ENCODE measurements at regions of chr12 and their contacts with region 1.

Region 1: DNA sequence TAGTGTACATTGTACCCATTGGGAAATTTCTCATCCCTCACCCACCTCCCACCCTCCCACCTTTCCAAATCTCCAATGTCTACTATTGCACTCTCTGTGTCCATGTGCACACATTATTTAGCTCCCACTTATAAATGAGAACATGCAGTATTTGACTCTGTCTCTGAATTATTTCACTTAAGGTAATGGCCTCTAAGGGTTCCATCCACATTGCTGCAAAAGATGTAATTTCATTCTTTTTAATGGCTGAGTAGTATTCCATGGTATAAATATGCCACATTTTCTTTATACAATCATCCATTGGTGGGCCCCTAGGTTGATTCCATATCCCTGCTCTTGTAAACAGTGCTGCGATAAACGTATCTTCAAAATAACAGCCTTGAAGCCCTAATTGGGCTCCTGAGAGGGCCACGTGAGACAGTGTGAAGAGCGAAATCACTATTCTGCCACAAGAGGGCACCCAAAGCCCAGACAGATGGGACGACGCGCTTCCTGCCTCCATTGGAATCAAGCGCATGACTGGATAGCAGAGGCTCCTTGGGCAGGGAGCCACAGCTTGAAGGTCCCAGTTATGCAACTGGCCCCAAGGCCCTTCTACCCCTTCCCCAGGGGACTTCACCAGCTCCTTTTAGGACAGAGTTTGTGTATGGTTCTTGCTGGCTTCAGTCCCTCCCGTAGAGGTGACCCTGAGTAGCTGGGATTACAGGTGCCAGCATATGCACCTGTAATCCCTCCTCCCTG is 21.3 kb upstream of the CD27 start:
- DNase-seq: no peak
- ATAC-seq: peak; percentile 70
- H3K4me3 ChIP-seq: no peak overlapping the region
- H3K27ac ChIP-seq: peak overlapping the region; percentile 61
- H3K4me1 ChIP-seq: peaks cover 44% of the 10 kb centered on the region
- H3K27me3 ChIP-seq: no peaks in the 10 kb centered on the region; a peak in 1 of 4 replicates
- CTCF ChIP-seq: peak; percentile 80 to 95 (median 87); a peak in 5 of 6 replicates
- EP300 ChIP-seq: peak in 1 of 2 experiments; percentile 31; a peak in 1 of 4 replicates
- POLR2A ChIP-seq: no peak
- RAD21 ChIP-seq: peak; percentile 97

Region 2: DNA sequence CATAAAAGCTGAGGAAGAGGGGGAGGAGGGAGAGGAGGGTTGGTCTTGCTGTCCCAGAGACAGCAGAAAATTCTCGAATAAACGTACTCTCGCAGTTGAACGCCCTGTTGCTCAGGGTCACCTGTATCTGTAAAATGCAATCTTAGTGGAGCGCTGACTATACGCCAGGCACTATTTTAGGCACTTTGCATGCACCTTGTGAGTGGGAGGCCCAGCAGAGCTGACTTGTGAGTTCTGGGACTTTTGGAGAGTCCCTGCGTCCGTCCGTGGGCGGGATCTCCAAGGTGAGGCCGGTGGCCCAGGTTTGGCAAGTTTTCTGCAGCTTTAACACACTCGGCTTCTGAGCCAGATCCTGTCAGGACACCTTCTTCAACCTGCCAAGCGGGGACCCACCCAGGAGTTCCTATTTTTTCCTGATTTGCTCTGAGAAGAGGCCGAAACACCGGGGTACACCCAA is 145.4 kb before region 1 on chr12:
- CTCF ChIA-PET with region 1: no interaction called
- POLR2A ChIA-PET with region 1: no interaction called
- RAD21 ChIA-PET with region 1: no interaction called
- SMC1A ChIA-PET with region 1: no interaction called
- in situ Hi-C with region 1: no loop called
- intact Hi-C with region 1: no loop called
- DNase-seq: no peak
- ATAC-seq: peak; percentile 62
- H3K4me3 ChIP-seq: peak overlapping the region; percentile 52; the same call in 1 of the 2 replicates
- H3K27ac ChIP-seq: no peak overlapping the region; the same call in 1 of the 2 replicates
- H3K4me1 ChIP-seq: peaks cover 12% of the 10 kb centered on the region
- H3K27me3 ChIP-seq: no peaks in the 10 kb centered on the region
- CTCF ChIP-seq: no peak
- EP300 ChIP-seq: no peak
- POLR2A ChIP-seq: no peak
- RAD21 ChIP-seq: no peak

Region 3: DNA sequence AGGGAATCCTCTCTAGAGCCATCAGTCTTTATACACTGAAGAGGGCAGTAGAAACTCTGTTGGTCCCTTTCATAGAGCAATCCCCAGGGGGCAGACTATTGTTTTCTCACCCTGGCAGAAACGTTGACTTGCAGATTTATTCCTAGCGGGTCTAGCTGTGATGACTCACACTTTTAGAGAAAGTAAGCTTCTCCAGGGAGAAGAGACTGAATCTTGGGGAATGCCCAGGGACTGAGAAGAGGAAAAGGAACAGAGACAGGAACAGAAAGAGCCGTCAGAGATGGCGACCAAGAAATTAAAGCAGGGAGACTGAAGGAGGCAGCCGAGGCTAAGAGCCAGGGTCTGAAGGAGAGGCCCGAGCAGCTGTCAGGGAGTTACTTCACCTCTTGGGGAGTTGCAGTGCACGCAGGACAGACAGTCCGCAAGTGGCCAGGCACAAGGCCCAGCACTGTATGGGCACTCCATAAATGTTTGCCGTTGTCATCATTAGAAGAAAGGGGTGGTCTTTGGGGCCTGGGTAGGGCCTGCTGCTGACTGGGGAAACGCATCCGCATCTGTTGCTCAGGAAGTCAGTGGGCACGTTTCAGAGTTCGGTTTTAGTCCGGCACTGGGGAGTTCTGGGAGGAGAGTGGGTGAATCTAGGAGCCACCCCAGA is 100.0 kb before region 1 on chr12:
- CTCF ChIA-PET with region 1: interaction called, 16 read pairs
- POLR2A ChIA-PET with region 1: interaction called, 3 read pairs
- RAD21 ChIA-PET with region 1: interaction called, 9 read pairs
- SMC1A ChIA-PET with region 1: interaction called, 17 read pairs
- in situ Hi-C with region 1: no loop called
- intact Hi-C with region 1: loop called (anchors 2 kb)
- DNase-seq: peak; percentile 71
- ATAC-seq: peak; percentile 87
- H3K4me3 ChIP-seq: no peak overlapping the region
- H3K27ac ChIP-seq: peak overlapping the region; percentile 79
- H3K4me1 ChIP-seq: peaks cover 31% of the 10 kb centered on the region
- H3K27me3 ChIP-seq: no peaks in the 10 kb centered on the region
- CTCF ChIP-seq: peak; percentile 38 to 45 (median 45); a peak in 5 of 6 replicates
- EP300 ChIP-seq: peak; percentile 46 to 53; a peak in 1 of 4 replicates
- POLR2A ChIP-seq: 0 out of 2 replicates have a peak, but pooled peaks have one; percentile 18
- RAD21 ChIP-seq: peak; percentile 34

Region 4: DNA sequence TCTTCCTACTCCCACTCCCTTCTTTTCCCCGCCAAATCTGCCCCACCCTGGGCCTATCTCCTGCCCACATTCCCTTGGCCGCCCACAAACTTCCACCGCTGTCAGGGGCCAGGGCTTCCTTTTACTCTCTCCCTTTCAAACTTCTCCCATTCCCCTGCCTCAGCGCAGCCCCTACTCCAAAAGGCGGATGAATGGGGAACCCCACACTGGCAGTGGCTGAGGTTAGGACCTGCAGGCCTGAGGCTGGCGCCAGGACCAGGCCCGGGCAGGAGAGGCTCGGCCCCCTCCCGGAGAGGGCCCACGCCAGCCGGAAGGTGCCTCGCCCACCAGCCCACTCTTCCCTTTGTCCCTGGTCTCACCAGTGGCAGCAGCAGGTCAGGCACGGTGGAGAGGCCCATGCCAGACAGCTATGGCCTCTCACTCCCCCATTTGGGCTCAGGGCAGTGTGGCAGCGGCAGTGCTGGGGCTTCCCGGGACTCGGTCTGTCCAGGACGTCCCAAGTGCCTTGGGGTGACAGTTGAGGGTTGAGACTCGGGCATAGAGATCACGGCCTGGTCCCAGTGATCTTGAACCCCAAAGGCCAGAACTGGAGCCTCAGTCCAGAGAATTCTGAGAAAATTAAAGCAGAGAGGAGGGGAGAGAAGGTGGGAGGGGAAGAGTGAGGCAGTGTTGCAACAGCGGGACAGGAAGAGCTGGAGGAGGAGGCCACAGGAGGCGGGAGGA is 81.9 kb before region 1 on chr12 and contains the start of gene TNFRSF1A:
- CTCF ChIA-PET with region 1: interaction called, 53 read pairs
- POLR2A ChIA-PET with region 1: interaction called, 9 read pairs
- RAD21 ChIA-PET with region 1: interaction called, 38 read pairs
- SMC1A ChIA-PET with region 1: interaction called, 32 read pairs
- in situ Hi-C with region 1: no loop called
- intact Hi-C with region 1: loop called (anchors 5 kb)
- DNase-seq: no peak
- ATAC-seq: peak; percentile 59
- H3K4me3 ChIP-seq: peak within 1 kb of the TSS; percentile 97
- H3K27ac ChIP-seq: peak within 1 kb of the TSS; percentile 88
- H3K4me1 ChIP-seq: peaks cover 29% of the 10 kb centered on the region
- H3K27me3 ChIP-seq: no peaks in the 10 kb centered on the region
- CTCF ChIP-seq: no peak
- EP300 ChIP-seq: no peak
- POLR2A ChIP-seq: peak; percentile 78
- RAD21 ChIP-seq: no peak
- polyA plus RNA-seq, gene TNFRSF1A: 0.24 to 0.77 TPM

Region 5: DNA sequence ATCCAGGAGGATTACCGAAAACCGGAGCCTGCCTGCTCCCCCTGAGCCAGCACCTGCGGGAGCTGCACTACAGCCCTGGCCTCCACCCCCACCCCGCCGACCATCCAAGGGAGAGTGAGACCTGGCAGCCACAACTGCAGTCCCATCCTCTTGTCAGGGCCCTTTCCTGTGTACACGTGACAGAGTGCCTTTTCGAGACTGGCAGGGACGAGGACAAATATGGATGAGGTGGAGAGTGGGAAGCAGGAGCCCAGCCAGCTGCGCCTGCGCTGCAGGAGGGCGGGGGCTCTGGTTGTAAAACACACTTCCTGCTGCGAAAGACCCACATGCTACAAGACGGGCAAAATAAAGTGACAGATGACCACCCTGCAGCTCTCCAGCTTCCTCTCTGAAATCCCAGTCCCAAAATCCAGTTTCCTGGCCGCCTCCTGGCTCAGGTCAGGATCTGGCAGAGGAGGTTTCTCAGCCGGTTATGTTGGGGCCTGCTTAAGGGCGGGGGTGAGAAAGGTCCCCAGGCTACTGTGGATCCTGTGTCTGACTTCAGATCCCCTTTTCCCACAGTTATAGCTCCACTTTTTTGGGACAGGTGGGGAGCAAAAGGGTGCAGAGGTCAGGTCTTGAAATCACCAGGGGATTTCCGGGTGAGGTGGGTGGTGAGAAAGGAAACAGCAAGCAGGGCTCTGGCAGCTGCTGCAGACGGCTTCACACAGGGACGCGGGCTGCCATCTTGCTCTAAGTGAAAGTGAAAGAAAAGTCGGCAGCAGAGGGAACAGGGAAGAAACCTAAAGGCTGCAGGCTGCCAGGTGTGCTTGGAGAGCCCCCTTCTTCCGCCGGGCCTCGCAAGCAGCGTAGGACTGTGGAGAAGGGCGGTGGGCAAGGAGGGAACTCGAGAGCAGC is 28.2 kb after region 1 on chr12 and contains the start of gene TAPBPL:
- CTCF ChIA-PET with region 1: interaction called, 37 read pairs
- POLR2A ChIA-PET with region 1: interaction called, 126 read pairs
- RAD21 ChIA-PET with region 1: interaction called, 126 read pairs
- SMC1A ChIA-PET with region 1: interaction called, 147 read pairs
- in situ Hi-C with region 1: no loop called
- intact Hi-C with region 1: loop called (anchors 1 kb)
- DNase-seq: peak; percentile 75
- ATAC-seq: peak; percentile 84
- H3K4me3 ChIP-seq: peak within 1 kb of the TSS; percentile 83
- H3K27ac ChIP-seq: peak within 1 kb of the TSS; percentile 98
- H3K4me1 ChIP-seq: peaks cover 38% of the 10 kb centered on the region
- H3K27me3 ChIP-seq: no peaks in the 10 kb centered on the region
- CTCF ChIP-seq: no peak
- EP300 ChIP-seq: peak; percentile 18 to 46; a peak in 1 of 4 replicates
- POLR2A ChIP-seq: peak; percentile 82
- RAD21 ChIP-seq: no peak
- polyA plus RNA-seq, gene TAPBPL: 12.4 to 20.9 TPM

Region 6: DNA sequence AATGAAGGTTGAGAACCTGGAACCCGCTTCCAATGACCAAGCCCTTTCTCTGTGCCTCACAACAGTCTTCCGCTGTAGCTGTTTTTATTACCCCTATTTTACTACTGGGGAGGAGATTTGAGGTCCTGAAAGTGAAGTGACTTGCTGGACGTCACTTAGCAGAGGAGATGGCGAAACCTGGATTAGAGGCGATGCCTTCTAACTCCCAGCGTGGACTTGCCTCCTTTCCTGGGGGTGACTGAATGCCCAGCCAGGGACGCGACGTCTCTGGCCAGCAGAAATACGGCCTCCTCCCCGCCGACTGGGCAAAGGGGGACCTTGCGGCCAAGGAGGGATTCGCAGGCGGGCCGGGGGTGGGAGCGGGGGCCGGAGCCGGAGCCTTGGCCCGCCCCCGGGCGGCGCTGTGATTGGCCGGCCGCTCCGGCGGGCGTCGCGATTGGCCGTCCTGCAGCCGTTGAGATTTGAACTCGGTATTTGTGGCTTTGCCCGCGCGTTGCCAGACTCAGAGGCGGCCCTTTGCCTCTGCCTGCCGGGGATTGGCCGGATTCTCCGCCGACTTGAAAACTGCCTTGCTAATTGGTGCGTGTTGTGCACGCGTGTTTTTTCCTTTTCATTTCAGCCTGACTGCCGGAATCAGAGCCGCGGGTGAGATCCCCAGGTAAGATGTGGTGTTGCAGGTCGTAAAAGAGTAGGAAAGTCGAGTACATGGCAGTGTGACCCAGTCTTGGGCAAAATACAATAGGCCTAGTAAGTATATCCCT is 70.2 kb after region 1 on chr12 and contains the start of gene NCAPD2:
- CTCF ChIA-PET with region 1: interaction called, 12 read pairs
- POLR2A ChIA-PET with region 1: interaction called, 7 read pairs
- RAD21 ChIA-PET with region 1: interaction called, 5 read pairs
- SMC1A ChIA-PET with region 1: interaction called, 23 read pairs
- in situ Hi-C with region 1: no loop called
- intact Hi-C with region 1: loop called (anchors 1 kb)
- DNase-seq: peak; percentile 88
- ATAC-seq: peak; percentile 94
- H3K4me3 ChIP-seq: peak within 1 kb of the TSS; percentile 93
- H3K27ac ChIP-seq: peak within 1 kb of the TSS; percentile 97
- H3K4me1 ChIP-seq: peaks cover 6% of the 10 kb centered on the region; the same call in 1 of the 2 replicates
- H3K27me3 ChIP-seq: no peaks in the 10 kb centered on the region
- CTCF ChIP-seq: peak in 2 of 3 experiments; percentile 2 to 25; a peak in 1 of 6 replicates
- EP300 ChIP-seq: no peak
- POLR2A ChIP-seq: peak; percentile 81
- RAD21 ChIP-seq: no peak
- polyA plus RNA-seq, gene NCAPD2: 24.2 to 32.8 TPM

Region 7: GRCh38 chr12:6540181-6540877 is 116.9 kb after region 1 on chr12:
- CTCF ChIA-PET with region 1: interaction called, 91 read pairs
- POLR2A ChIA-PET with region 1: interaction called, 19 read pairs
- RAD21 ChIA-PET with region 1: interaction called, 67 read pairs
- SMC1A ChIA-PET with region 1: interaction called, 83 read pairs
- in situ Hi-C with region 1: no loop called
- intact Hi-C with region 1: loop called (anchors 1 kb)
- DNase-seq: no peak
- ATAC-seq: peak; percentile 60
- H3K4me3 ChIP-seq: peak overlapping the region; percentile 28
- H3K27ac ChIP-seq: peak overlapping the region; percentile 42
- H3K4me1 ChIP-seq: peaks cover 26% of the 10 kb centered on the region
- H3K27me3 ChIP-seq: no peaks in the 10 kb centered on the region
- CTCF ChIP-seq: peak in 1 of 3 experiments; percentile 35; a peak in 1 of 6 replicates
- EP300 ChIP-seq: no peak
- POLR2A ChIP-seq: no peak
- RAD21 ChIP-seq: no peak

Region 8: DNA sequence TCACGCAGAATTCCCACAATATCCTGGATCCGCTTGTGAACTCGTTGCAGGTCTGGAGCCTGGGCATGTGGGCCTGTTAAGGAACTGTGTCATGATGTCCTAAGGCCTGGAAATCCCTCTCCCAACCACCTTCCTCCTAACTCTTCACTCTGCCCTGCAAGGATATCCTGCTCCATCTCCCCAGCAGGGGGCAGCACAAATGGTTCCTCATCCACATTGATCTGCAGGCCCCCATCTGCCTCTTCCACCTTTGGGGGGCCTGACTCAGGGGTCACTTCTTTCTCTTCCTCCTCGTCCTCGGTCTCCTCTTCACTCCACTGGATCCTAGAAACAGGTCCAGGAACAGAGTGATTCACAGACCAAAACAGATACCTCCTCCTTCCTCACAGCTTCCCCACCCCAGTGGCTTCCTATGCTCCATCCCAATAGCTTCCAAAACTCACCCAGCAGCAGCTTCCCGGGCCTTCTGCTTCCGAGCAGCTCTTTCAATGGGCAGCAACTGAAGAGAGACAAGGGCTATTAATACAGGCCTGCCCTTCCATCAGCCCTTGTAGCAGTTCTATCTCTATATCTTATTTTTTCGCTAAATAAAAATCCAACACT is 140.1 kb after region 1 on chr12:
- CTCF ChIA-PET with region 1: interaction called, 6 read pairs
- POLR2A ChIA-PET with region 1: interaction called, 3 read pairs
- RAD21 ChIA-PET with region 1: interaction called, 3 read pairs
- SMC1A ChIA-PET with region 1: interaction called, 10 read pairs
- in situ Hi-C with region 1: no loop called
- intact Hi-C with region 1: no loop called
- DNase-seq: no peak
- ATAC-seq: peak; percentile 54
- H3K4me3 ChIP-seq: no peak overlapping the region
- H3K27ac ChIP-seq: no peak overlapping the region
- H3K4me1 ChIP-seq: peaks cover 4% of the 10 kb centered on the region; the same call in 1 of the 2 replicates
- H3K27me3 ChIP-seq: no peaks in the 10 kb centered on the region
- CTCF ChIP-seq: peak; percentile 69 to 84 (median 73)
- EP300 ChIP-seq: no peak
- POLR2A ChIP-seq: no peak; the same call in 1 of the 2 replicates
- RAD21 ChIP-seq: peak; percentile 42

Region 9: GRCh38 chr12:7018350-7019042 is 595.1 kb after region 1 on chr12 and contains the start of gene LPCAT3:
- CTCF ChIA-PET with region 1: no interaction called
- POLR2A ChIA-PET with region 1: no interaction called
- RAD21 ChIA-PET with region 1: no interaction called
- SMC1A ChIA-PET with region 1: no interaction called
- in situ Hi-C with region 1: no loop called
- intact Hi-C with region 1: no loop called
- DNase-seq: peak; percentile 83
- ATAC-seq: peak; percentile 97
- H3K4me3 ChIP-seq: peak within 1 kb of the TSS; percentile 91
- H3K27ac ChIP-seq: peak within 1 kb of the TSS; percentile 75
- H3K4me1 ChIP-seq: no peaks in the 10 kb centered on the region
- H3K27me3 ChIP-seq: no peaks in the 10 kb centered on the region
- CTCF ChIP-seq: peak; percentile 82 to 90 (median 83); a peak in 5 of 6 replicates
- EP300 ChIP-seq: no peak
- POLR2A ChIP-seq: peak; percentile 86
- RAD21 ChIP-seq: peak; percentile 41
- polyA plus RNA-seq, gene LPCAT3: 2.6 to 3.7 TPM